ENCODE measurements at regions of chr15 and their contacts with region 1.

Region 1: DNA sequence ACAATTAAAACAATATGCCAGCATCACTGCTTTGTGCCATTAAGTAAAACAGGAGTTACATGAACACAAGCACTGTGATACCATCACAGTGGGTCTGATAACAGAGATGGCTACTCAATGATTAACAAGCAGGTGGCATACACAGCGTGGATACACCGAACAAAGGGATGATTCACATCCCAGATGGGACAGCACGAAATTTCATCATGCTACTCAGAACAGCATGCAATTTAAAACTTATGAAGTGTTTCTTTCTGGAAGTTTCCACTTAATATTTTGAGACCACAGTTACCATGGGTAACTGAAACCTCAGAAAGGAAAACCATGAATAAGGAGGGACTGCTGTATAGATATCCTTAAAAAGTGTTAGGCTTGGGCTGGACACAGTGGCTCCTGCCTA is 44.5 kb downstream of the SLC24A1 start:
- DNase-seq: peak in 1 of 3 donors; percentile 41
- H3K4me3 ChIP-seq: no peak overlapping the region
- H3K4me3 Mint-ChIP-seq: no peak overlapping the region
- H3K27ac ChIP-seq: no peak overlapping the region
- H3K27ac Mint-ChIP-seq: peak overlapping the region in 1 of 7 donors; percentile 69
- H3K4me1 ChIP-seq: no peaks in the 10 kb centered on the region
- H3K4me1 Mint-ChIP-seq: no peaks in the 10 kb centered on the region
- H3K27me3 ChIP-seq: no peaks in the 10 kb centered on the region
- H3K27me3 Mint-ChIP-seq: no peaks in the 10 kb centered on the region
- CTCF ChIP-seq: no peak

Region 2: GRCh38 chr15:65476903-65477302 is 189.4 kb before region 1 on chr15:
- intact Hi-C with region 1: loop called in 1 of 2 experiments (anchors 10 kb)
- DNase-seq: no peak
- H3K4me3 ChIP-seq: no peak overlapping the region
- H3K4me3 Mint-ChIP-seq: no peak overlapping the region
- H3K27ac ChIP-seq: no peak overlapping the region
- H3K27ac Mint-ChIP-seq: peak overlapping the region in 3 of 7 donors; percentile 7 to 17 (median 11)
- H3K4me1 ChIP-seq: no peaks in the 10 kb centered on the region
- H3K4me1 Mint-ChIP-seq: no peaks in the 10 kb centered on the region
- H3K27me3 ChIP-seq: no peaks in the 10 kb centered on the region
- H3K27me3 Mint-ChIP-seq: peaks cover 0 to 3% (median 0%) of the 10 kb centered on the region in 3 donors
- CTCF ChIP-seq: no peak

Region 3: GRCh38 chr15:65603134-65603533 is 63.1 kb before region 1 on chr15:
- intact Hi-C with region 1: no loop called
- DNase-seq: no peak
- H3K4me3 ChIP-seq: no peak overlapping the region
- H3K4me3 Mint-ChIP-seq: no peak overlapping the region
- H3K27ac ChIP-seq: no peak overlapping the region
- H3K27ac Mint-ChIP-seq: no peak overlapping the region
- H3K4me1 ChIP-seq: no peaks in the 10 kb centered on the region
- H3K4me1 Mint-ChIP-seq: no peaks in the 10 kb centered on the region
- H3K27me3 ChIP-seq: no peaks in the 10 kb centered on the region
- H3K27me3 Mint-ChIP-seq: no peaks in the 10 kb centered on the region
- CTCF ChIP-seq: no peak